Calu3 (cell line): ENCODE measurements at regions of chr6 and their contacts with region 1.

Region 1: DNA sequence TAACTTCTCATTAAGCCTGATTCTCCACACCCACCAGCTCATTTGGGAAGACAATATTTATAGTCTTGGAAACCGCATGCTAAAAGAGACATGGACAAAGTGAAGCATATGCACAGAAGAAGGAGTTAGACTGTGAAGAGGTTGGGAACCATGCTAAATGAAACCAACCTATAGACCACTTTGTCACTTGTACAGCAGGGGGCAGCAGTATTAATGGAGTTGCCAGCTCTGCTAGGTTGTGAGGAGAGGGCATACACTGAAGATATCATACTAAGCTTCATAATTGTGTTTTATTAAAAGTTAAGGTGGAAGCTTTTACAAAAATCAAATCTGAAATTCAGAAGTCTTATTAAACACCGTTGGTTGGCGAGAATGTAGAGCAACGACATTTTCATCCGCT is 38.3 kb upstream of the HMGCLL1 start:
- DNase-seq: peak; percentile 42
- H3K4me3 Mint-ChIP-seq: no peak overlapping the region
- H3K27ac Mint-ChIP-seq: no peak overlapping the region
- H3K4me1 Mint-ChIP-seq: no peaks in the 10 kb centered on the region
- H3K27me3 Mint-ChIP-seq: no peaks in the 10 kb centered on the region
- CTCF ChIP-seq: peak; percentile 37

Region 2: DNA sequence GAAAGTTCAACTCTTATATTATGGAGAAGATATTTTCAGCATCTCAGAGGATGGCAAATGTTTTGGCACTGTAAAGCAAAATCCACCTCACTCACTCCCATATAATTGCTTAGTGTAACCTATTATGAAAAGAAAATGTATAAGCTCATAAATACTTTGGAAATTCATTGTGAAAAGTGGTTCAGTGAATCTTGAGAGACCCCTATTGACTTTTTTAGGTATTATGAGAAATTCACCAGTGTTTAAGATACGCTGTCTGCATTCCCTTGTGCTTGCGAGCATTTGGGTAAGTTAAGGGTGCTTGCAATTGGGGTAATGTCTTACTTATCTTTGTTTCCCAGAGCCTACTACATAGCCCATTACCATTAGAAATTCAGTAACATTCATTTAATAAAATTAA is 324.4 kb after region 1 on chr6:
- CTCF ChIA-PET with region 1: no interaction called
- intact Hi-C with region 1: loop called (anchors 5 kb)
- DNase-seq: no peak
- H3K4me3 Mint-ChIP-seq: no peak overlapping the region
- H3K27ac Mint-ChIP-seq: no peak overlapping the region
- H3K4me1 Mint-ChIP-seq: no peaks in the 10 kb centered on the region
- H3K27me3 Mint-ChIP-seq: no peaks in the 10 kb centered on the region
- CTCF ChIP-seq: peak; percentile 25